ENCODE measurements at regions of chr5 and their contacts with region 1.

Region 1: DNA sequence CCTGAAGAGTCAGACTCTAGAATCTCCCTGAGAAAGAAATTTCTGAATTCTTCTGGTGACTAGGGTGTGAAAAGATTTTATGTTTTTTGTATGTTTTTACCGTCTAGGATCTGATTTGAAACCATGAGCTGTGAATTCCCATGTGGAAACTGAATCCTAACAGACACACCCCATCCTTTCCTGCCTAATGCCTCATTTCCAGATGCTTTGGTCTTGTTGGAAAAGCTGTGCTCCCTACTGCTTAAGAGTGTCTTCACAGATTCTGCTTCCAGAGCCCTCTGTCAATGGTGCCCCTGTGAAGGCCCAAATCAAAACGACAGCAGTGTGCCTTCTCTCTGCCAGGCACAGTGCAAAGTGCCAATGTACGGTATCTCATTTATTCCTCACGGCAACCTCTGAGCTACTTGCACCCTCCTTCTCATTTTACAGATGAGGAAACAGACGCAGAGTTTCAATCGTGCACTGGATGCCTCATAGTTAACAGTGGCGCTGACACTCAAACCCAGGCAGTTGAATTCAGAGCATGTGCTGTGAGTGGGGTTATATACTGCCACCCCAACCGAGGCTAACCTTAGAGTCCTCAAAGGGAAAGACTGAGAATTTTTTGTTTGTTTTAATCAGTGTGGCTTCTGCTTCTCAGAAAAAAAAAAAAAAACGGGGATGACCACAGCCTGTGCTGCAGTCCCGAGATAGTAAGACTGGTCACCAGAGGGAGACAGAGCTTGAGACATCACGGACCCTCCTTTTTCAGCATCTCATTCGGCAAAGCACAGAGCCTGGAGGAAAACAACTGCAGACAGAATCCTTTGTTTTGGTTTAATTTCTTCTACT is 188.4 kb downstream of the SNCAIP start:
- DNase-seq: peak; percentile 62 to 70
- H3K4me3 ChIP-seq: no peak overlapping the region
- H3K4me3 Mint-ChIP-seq: no peak overlapping the region
- H3K27ac Mint-ChIP-seq: no peak overlapping the region
- H3K4me1 ChIP-seq: no peaks in the 10 kb centered on the region
- H3K4me1 Mint-ChIP-seq: peaks cover 9% of the 10 kb centered on the region
- H3K27me3 ChIP-seq: no peaks in the 10 kb centered on the region
- H3K27me3 Mint-ChIP-seq: no peaks in the 10 kb centered on the region
- CTCF ChIP-seq: peak; percentile 82 to 84

Region 2: GRCh38 chr5:122311961-122312590 is 188.4 kb before region 1 on chr5 and contains the start of gene SNCAIP:
- CTCF ChIA-PET with region 1: no interaction called
- POLR2A ChIA-PET with region 1: no interaction called
- intact Hi-C with region 1: loop called (anchors 10 kb)
- DNase-seq: peak; percentile 56 to 63
- H3K4me3 ChIP-seq: peak within 1 kb of the TSS; percentile 43
- H3K4me3 Mint-ChIP-seq: peak within 1 kb of the TSS; percentile 75
- H3K27ac Mint-ChIP-seq: no peak within 1 kb of the TSS
- H3K4me1 ChIP-seq: no peaks in the 10 kb centered on the region
- H3K4me1 Mint-ChIP-seq: peaks cover 9% of the 10 kb centered on the region
- H3K27me3 ChIP-seq: no peaks in the 10 kb centered on the region
- H3K27me3 Mint-ChIP-seq: peaks cover 6% of the 10 kb centered on the region
- CTCF ChIP-seq: no peak
- total RNA-seq, gene SNCAIP: 1.0 and 1.2 TPM in 2 replicates

Region 3: DNA sequence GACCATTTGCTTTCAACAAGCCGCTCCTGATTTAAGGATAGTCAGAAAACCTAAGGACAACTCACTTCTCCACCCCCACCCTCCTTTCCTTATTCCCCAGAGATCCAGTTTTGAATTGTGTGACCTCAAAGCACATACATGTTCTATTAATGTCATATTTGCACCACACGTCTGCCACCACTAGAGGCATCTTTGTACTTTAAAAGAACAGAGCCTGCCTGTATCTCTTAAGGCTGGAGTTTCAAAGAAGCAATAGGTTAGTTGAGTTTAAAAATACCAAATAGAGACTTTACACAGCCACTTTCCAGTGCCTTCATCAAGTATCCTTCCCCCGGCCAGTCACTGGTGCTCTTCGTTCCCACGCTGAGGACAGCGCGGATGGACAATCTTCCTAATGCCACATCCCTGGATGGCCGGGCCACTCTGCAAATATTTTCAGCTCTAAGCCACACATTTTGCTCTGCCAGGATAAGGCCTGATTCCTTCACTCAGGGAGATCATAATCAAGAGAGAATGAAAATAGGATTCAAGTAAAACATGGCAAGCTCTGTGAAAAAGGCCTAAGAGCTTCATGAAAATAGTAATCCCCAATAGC is 42.1 kb before region 1 on chr5:
- CTCF ChIA-PET with region 1: interaction called, 7 read pairs
- POLR2A ChIA-PET with region 1: no interaction called
- intact Hi-C with region 1: loop called (anchors 1 kb)
- DNase-seq: peak in 1 of 2 experiments; percentile 37
- H3K4me3 ChIP-seq: no peak overlapping the region
- H3K4me3 Mint-ChIP-seq: no peak overlapping the region
- H3K27ac Mint-ChIP-seq: no peak overlapping the region
- H3K4me1 ChIP-seq: no peaks in the 10 kb centered on the region
- H3K4me1 Mint-ChIP-seq: no peaks in the 10 kb centered on the region
- H3K27me3 ChIP-seq: no peaks in the 10 kb centered on the region
- H3K27me3 Mint-ChIP-seq: no peaks in the 10 kb centered on the region
- CTCF ChIP-seq: peak; percentile 59 to 78

Region 4: GRCh38 chr5:122532035-122532434 is 31.6 kb after region 1 on chr5:
- CTCF ChIA-PET with region 1: no interaction called
- POLR2A ChIA-PET with region 1: no interaction called
- intact Hi-C with region 1: no loop called
- DNase-seq: no peak
- H3K4me3 ChIP-seq: no peak overlapping the region
- H3K4me3 Mint-ChIP-seq: no peak overlapping the region
- H3K27ac Mint-ChIP-seq: no peak overlapping the region
- H3K4me1 ChIP-seq: no peaks in the 10 kb centered on the region
- H3K4me1 Mint-ChIP-seq: no peaks in the 10 kb centered on the region
- H3K27me3 ChIP-seq: no peaks in the 10 kb centered on the region
- H3K27me3 Mint-ChIP-seq: peaks cover 21% of the 10 kb centered on the region
- CTCF ChIP-seq: no peak

Region 5: DNA sequence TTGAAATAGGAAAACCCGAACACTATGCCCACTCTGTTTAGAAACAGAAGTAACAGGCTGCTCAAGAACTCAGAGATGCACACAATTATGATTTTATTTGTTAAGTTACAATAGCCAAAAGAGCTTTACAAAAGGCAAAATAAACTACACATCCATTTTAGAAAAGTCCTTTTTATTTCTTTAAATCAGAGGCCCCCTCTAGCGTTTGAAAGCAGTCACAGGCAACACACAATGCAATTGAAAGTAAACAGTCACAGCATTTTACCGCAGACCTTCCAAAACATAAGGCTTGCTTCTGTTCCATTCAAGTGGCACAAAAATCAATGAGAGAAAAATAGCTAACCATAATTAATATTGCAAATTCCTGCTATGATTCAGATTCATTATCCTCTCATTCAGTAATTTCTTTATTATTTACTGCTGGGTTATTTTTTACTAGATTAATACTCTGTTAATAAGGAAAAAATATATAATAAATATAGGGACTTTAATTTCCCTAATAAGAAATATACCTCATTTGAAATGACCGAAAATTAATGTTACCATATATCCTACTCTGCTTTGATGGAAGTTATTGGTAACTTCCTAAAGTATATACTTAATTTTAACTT is 844.5 kb after region 1 on chr5:
- CTCF ChIA-PET with region 1: no interaction called
- POLR2A ChIA-PET with region 1: no interaction called
- intact Hi-C with region 1: loop called (anchors 1 kb)
- DNase-seq: peak in 1 of 2 experiments; percentile 22
- H3K4me3 ChIP-seq: no peak overlapping the region
- H3K4me3 Mint-ChIP-seq: no peak overlapping the region
- H3K27ac Mint-ChIP-seq: no peak overlapping the region
- H3K4me1 ChIP-seq: 0 out of 2 replicates have a peak, but pooled peaks cover 4% of the 10 kb centered on the region
- H3K4me1 Mint-ChIP-seq: no peaks in the 10 kb centered on the region
- H3K27me3 ChIP-seq: no peaks in the 10 kb centered on the region
- H3K27me3 Mint-ChIP-seq: no peaks in the 10 kb centered on the region
- CTCF ChIP-seq: peak; percentile 46 to 64

Region 6: DNA sequence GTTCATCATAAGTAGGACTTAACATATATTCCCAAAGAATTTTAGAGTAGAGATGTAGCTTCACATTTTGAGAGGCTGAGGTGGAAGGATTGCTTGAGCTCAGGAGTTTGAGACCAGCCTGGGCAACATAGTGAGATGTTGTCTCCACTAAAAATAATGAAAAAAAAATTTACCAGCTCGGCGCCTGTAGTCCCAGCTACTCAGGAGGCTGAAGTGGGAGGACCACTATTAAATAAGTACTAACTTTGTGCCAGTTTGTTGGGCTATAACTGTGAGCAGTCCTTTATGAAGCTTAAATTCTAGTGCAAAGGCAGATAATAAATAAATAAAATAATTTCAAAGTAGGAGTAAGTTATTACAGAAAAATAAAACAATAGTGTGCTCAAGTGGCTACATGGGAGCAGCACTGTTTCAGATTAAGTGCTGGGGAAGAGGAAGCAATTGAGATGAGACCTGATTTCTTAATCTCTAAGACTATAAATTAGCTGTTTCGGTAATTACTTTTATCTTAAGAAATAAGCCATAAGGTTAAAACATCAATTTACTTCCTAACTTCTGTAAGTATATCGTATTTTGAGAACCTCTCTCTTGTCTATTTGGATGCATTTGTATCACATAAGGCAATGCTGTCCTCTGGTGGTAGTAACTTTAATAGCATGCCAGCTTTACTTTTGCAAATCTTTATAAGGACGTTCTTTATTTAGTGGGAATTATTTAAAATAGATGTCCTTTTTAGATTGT is 1110.4 kb after region 1 on chr5:
- CTCF ChIA-PET with region 1: no interaction called
- POLR2A ChIA-PET with region 1: no interaction called
- intact Hi-C with region 1: loop called (anchors 5 kb)
- DNase-seq: peak in 1 of 2 experiments; percentile 51
- H3K4me3 ChIP-seq: no peak overlapping the region
- H3K4me3 Mint-ChIP-seq: no peak overlapping the region
- H3K27ac Mint-ChIP-seq: no peak overlapping the region
- H3K4me1 ChIP-seq: no peaks in the 10 kb centered on the region
- H3K4me1 Mint-ChIP-seq: no peaks in the 10 kb centered on the region
- H3K27me3 ChIP-seq: no peaks in the 10 kb centered on the region
- H3K27me3 Mint-ChIP-seq: no peaks in the 10 kb centered on the region
- CTCF ChIP-seq: peak; percentile 77 to 85